Heart right ventricle (tissue), 16 donors: ENCODE measurements at regions of chr6 and their contacts with region 1.

Region 1: DNA sequence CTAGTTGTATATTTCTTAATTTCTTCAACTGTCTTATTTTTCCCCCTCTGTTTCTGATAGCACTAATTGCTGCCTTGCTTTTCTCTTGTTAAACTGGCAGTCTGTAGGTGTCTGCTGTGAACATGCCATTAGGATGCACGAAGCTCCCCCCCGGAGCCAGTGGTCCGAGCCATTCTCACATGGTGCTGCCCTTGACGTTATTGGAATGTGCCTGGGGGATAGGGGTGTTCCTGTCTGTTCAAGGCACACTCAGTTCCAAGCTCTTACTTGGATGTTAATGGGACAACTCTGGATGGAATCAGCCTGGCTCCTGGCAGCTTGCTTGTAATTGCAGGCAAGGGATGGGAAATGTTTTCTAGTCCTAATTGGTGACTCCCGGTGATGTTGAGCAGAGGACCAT is 68.4 kb downstream of the RREB1 start:
- DNase-seq: no peak
- ATAC-seq: peak in 6 of 8 donors; percentile 29 to 92 (median 70)
- H3K4me3 ChIP-seq: no peak overlapping the region
- H3K27ac ChIP-seq: peak overlapping the region in 2 of 10 donors; percentile 9 to 42
- H3K4me1 ChIP-seq: peaks cover 0 to 57% (median 49%) of the 10 kb centered on the region in 9 donors
- H3K27me3 ChIP-seq: no peaks in the 10 kb centered on the region
- CTCF ChIP-seq: no peak

Region 2: DNA sequence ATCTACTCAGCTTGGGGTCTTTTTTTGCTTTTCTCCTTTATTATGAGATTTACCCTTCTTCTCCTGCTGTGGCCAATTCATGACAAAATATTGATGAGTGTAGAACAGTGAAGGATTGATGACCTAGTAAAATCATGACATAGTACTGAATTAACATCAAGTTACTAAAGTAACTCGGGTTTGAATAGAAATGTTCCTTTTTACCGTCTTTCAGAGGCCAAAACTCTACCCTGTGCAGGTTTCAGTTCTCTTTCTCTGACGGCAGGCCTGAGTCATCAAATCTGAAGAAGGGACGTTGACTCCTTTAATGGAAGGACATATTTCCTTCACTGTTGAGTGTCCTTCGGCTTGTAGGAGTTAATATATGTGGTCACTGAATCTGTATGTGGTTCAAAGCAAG is 12.3 kb after region 1 on chr6:
- intact Hi-C with region 1: loop called in 1 of 10 experiments (anchors 1 kb)
- DNase-seq: no peak
- ATAC-seq: peak in 7 of 8 donors; percentile 22 to 74 (median 44)
- H3K4me3 ChIP-seq: no peak overlapping the region
- H3K27ac ChIP-seq: peak overlapping the region in 3 of 10 donors; percentile 24 to 81 (median 28)
- H3K4me1 ChIP-seq: peaks cover 0 to 34% (median 2%) of the 10 kb centered on the region in 9 donors
- H3K27me3 ChIP-seq: no peaks in the 10 kb centered on the region
- CTCF ChIP-seq: no peak

Region 3: GRCh38 chr6:7389451-7390225 is 213.4 kb after region 1 on chr6 and contains the starts of genes CAGE1 and RIOK1:
- intact Hi-C with region 1: no loop called
- DNase-seq: peak; percentile 95
- ATAC-seq: peak; percentile 99 to 100 (median 100)
- H3K4me3 ChIP-seq: peak within 1 kb of the TSS; percentile 68 to 90 (median 80)
- H3K27ac ChIP-seq: peak within 1 kb of the TSS; percentile 49 to 95 (median 90)
- H3K4me1 ChIP-seq: peaks cover 3 to 28% (median 22%) of the 10 kb centered on the region in 9 donors
- H3K27me3 ChIP-seq: no peaks in the 10 kb centered on the region
- CTCF ChIP-seq: peak in 5 of 9 donors; percentile 15 to 39 (median 31)
- total RNA-seq, gene CAGE1: 0.08 to 0.32 TPM in 2 of 10 donors, not detected in the others
- total RNA-seq, gene RIOK1: 7.0 to 13.4 (median 11.0) TPM

Region 4: DNA sequence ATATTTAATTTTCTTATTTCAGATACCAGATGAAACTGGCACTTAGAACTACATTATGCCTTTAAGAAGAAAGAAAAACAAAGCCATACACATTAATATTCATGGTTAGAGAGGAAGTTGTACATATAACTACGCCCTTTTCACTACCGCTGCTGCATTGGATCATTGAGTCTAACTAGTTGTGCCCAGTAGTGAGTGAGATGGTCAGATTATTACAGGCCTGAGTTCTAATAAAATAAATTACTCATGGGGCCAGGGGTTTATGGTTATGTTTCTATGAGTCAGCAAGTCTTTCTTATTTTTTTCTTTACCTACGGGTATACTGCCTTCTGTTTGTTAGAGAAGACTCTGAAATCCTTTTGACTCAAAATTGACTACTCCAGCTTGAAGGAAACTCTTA is 224.9 kb after region 1 on chr6:
- intact Hi-C with region 1: no loop called
- DNase-seq: no peak
- ATAC-seq: no peak
- H3K4me3 ChIP-seq: no peak overlapping the region
- H3K27ac ChIP-seq: no peak overlapping the region
- H3K4me1 ChIP-seq: peaks cover 0 to 3% (median 0%) of the 10 kb centered on the region in 9 donors
- H3K27me3 ChIP-seq: no peaks in the 10 kb centered on the region
- CTCF ChIP-seq: no peak